ENCODE measurements at regions of chrX and their contacts with region 1.

Region 1: DNA sequence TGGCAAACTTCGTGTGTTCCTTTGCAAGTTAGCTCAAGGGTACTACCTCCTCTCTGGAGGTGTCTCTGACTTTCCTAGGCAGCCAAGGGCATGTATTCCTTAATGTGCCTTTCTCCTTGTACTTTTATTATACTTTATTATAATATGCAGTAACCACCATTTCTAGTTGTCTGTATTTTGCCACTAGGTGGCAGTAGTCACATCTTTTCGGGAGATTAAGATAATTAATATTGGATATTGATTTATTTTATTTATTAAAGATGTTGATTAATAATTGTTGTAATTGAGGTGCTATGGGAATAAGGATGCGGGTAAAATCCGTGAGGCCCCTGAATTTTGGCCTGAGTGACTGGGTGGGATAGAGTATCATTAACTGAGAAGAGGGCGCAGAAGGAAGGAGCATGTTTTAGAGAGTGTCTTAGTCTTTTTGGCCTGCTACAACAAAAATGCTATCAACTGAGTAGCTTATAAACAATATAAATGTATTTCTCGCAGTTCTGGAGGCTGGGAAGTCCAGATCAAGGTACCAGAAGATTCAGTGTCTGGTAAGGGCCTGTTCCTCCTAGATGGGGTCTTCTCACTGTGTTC is 153.3 kb downstream of the TMEM164 start:
- DNase-seq: peak; percentile 32
- ATAC-seq: no peak
- H3K4me3 ChIP-seq: no peak overlapping the region
- H3K4me3 Mint-ChIP-seq: no peak overlapping the region
- H3K27ac ChIP-seq: no peak overlapping the region
- H3K27ac Mint-ChIP-seq: no peak overlapping the region
- H3K4me1 ChIP-seq: peaks cover 0 to 12% of the 10 kb centered on the region in 2 donors
- H3K4me1 Mint-ChIP-seq: peaks cover 12% of the 10 kb centered on the region
- H3K27me3 ChIP-seq: no peaks in the 10 kb centered on the region
- H3K27me3 Mint-ChIP-seq: no peaks in the 10 kb centered on the region
- CTCF ChIP-seq: peak; percentile 71

Region 2: DNA sequence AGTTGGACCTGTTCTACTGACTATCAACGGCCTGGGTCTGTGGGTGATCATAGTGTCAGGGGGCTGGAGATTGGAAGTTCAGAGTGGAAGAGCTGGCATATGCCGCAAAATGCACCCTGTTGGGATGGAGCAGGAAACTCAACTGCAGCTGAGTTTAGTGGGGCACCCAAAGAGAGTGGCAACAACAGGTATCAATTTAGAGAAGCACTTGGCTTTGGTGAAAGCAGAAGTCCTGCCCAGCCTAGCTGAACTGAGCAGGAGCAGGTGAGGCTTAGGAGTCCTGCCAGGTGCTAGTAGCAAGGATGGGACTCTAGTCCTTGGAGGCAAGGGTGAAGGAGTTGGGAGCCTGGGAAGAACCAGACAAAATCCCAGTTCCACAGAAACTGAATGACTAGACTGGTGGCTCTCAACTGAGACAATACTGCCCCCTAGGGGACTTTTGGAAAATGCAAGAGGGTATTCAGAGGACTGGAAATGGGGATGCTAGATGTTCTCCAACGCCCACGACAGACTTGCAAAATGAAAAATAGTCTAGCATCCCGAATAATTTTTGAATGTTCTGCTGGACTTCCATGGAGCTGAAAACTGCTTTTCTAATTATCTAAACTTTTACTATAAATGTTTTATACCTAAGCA is 251.8 kb after region 1 on chrX:
- CTCF ChIA-PET with region 1: interaction called, 721 read pairs
- POLR2A ChIA-PET with region 1: no interaction called
- intact Hi-C with region 1: loop called (anchors 1 kb)
- DNase-seq: peak; percentile 63
- ATAC-seq: peak; percentile 47
- H3K4me3 ChIP-seq: no peak overlapping the region
- H3K4me3 Mint-ChIP-seq: no peak overlapping the region
- H3K27ac ChIP-seq: no peak overlapping the region
- H3K27ac Mint-ChIP-seq: no peak overlapping the region
- H3K4me1 ChIP-seq: no peaks in the 10 kb centered on the region
- H3K4me1 Mint-ChIP-seq: peaks cover 1% of the 10 kb centered on the region
- H3K27me3 ChIP-seq: no peaks in the 10 kb centered on the region
- H3K27me3 Mint-ChIP-seq: peaks cover under 1% of the 10 kb centered on the region
- CTCF ChIP-seq: peak; percentile 70

Region 3: GRCh38 chrX:110412971-110413721 is 256.9 kb after region 1 on chrX:
- CTCF ChIA-PET with region 1: interaction called, 721 read pairs
- POLR2A ChIA-PET with region 1: no interaction called
- intact Hi-C with region 1: loop called (anchors 1 kb)
- DNase-seq: peak; percentile 72
- ATAC-seq: peak; percentile 82
- H3K4me3 ChIP-seq: no peak overlapping the region
- H3K4me3 Mint-ChIP-seq: no peak overlapping the region
- H3K27ac ChIP-seq: no peak overlapping the region
- H3K27ac Mint-ChIP-seq: no peak overlapping the region
- H3K4me1 ChIP-seq: no peaks in the 10 kb centered on the region
- H3K4me1 Mint-ChIP-seq: peaks cover 4% of the 10 kb centered on the region
- H3K27me3 ChIP-seq: no peaks in the 10 kb centered on the region
- H3K27me3 Mint-ChIP-seq: peaks cover 2% of the 10 kb centered on the region
- CTCF ChIP-seq: peak; percentile 73

Region 4: DNA sequence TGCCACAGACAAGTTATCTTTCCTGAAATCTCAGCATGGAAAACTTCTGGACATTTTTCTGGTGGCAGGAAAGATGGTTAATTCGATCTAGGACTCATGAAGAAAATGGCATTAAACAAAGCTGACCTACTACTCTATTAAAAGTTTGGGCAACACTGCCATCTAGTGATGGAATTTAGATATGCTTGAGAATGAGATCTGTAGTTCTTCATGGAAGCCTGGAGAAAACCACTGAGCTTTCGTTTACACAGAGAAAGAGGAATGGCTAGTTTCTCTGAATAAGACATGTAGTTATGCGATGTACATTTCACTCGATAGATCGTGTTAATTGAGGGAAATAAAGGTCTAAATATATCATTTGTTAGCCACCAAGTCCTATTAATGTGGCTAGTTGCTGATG is 691.1 kb after region 1 on chrX:
- CTCF ChIA-PET with region 1: interaction called, 4 read pairs
- POLR2A ChIA-PET with region 1: no interaction called
- intact Hi-C with region 1: loop called (anchors 5 kb)
- DNase-seq: peak; percentile 50
- ATAC-seq: no peak
- H3K4me3 ChIP-seq: no peak overlapping the region
- H3K4me3 Mint-ChIP-seq: no peak overlapping the region
- H3K27ac ChIP-seq: no peak overlapping the region
- H3K27ac Mint-ChIP-seq: no peak overlapping the region
- H3K4me1 ChIP-seq: no peaks in the 10 kb centered on the region
- H3K4me1 Mint-ChIP-seq: no peaks in the 10 kb centered on the region
- H3K27me3 ChIP-seq: no peaks in the 10 kb centered on the region
- H3K27me3 Mint-ChIP-seq: no peaks in the 10 kb centered on the region
- CTCF ChIP-seq: peak; percentile 62

Measured in B cell (primary cell).